ENCODE measurements at regions of chr11 and their contacts with region 1.

Region 1: GRCh38 chr11:89613911-89614310 is 96.2 kb upstream of the TRIM77 start:
- DNase-seq: no peak
- ATAC-seq: no peak
- H3K4me3 ChIP-seq: no peak overlapping the region
- H3K27ac ChIP-seq: no peak overlapping the region
- H3K4me1 ChIP-seq: no peaks in the 10 kb centered on the region
- H3K27me3 ChIP-seq: no peaks in the 10 kb centered on the region
- CTCF ChIP-seq: no peak

Region 2: GRCh38 chr11:89205378-89205777 is 408.5 kb before region 1 on chr11:
- CTCF ChIA-PET with region 1: no interaction called
- POLR2A ChIA-PET with region 1: no interaction called
- intact Hi-C with region 1: loop called (anchors 5 kb)
- DNase-seq: peak; percentile 26
- ATAC-seq: no peak
- H3K4me3 ChIP-seq: no peak overlapping the region
- H3K27ac ChIP-seq: no peak overlapping the region
- H3K4me1 ChIP-seq: no peaks in the 10 kb centered on the region
- H3K27me3 ChIP-seq: 0 out of 2 replicates have a peak, but pooled peaks cover 3% of the 10 kb centered on the region
- CTCF ChIP-seq: peak; percentile 61

Region 3: GRCh38 chr11:89327885-89328284 is 286.0 kb before region 1 on chr11:
- CTCF ChIA-PET with region 1: no interaction called
- POLR2A ChIA-PET with region 1: no interaction called
- intact Hi-C with region 1: loop called (anchors 5 kb)
- DNase-seq: no peak
- ATAC-seq: no peak
- H3K4me3 ChIP-seq: no peak overlapping the region
- H3K27ac ChIP-seq: no peak overlapping the region
- H3K4me1 ChIP-seq: no peaks in the 10 kb centered on the region
- H3K27me3 ChIP-seq: peaks cover 3% of the 10 kb centered on the region
- CTCF ChIP-seq: no peak

Region 4: GRCh38 chr11:89405629-89406028 is 208.3 kb before region 1 on chr11:
- CTCF ChIA-PET with region 1: no interaction called
- POLR2A ChIA-PET with region 1: no interaction called
- intact Hi-C with region 1: no loop called
- DNase-seq: peak; percentile 47
- ATAC-seq: peak; percentile 35; the same call in 1 of the 2 replicates
- H3K4me3 ChIP-seq: no peak overlapping the region
- H3K27ac ChIP-seq: no peak overlapping the region
- H3K4me1 ChIP-seq: no peaks in the 10 kb centered on the region
- H3K27me3 ChIP-seq: no peaks in the 10 kb centered on the region
- CTCF ChIP-seq: peak; percentile 60

Region 5: DNA sequence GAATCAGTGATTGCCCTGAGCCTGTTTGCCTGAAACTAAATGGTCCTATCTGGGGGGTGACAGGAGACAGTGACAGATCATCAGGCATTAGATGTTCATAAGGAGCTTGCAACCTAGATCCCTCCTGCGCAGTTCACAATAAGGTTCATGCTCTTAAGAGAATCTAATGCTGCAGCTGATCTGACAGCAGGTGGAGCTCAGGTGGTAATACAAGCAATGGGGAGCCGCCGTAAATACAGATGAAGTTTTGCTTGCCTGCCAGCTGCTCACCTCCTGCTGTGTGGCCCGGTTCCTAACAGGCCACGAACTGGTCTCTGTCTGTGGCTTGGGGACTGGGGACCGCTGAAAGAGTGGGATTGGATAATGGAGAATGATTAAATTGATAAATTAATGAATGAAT is 136.7 kb before region 1 on chr11:
- CTCF ChIA-PET with region 1: no interaction called
- POLR2A ChIA-PET with region 1: no interaction called
- intact Hi-C with region 1: loop called (anchors 5 kb)
- DNase-seq: peak; percentile 41
- ATAC-seq: peak; percentile 63
- H3K4me3 ChIP-seq: no peak overlapping the region
- H3K27ac ChIP-seq: no peak overlapping the region
- H3K4me1 ChIP-seq: no peaks in the 10 kb centered on the region
- H3K27me3 ChIP-seq: 0 out of 2 replicates have a peak, but pooled peaks cover 4% of the 10 kb centered on the region
- CTCF ChIP-seq: peak; percentile 34; the same call in 1 of the 2 replicates

Measured in PC-3 (cell line).